ENCODE measurements at regions of chr18 and their contacts with region 1.

Region 1: GRCh38 chr18:24488824-24489493 is 28.5 kb downstream of the HRH4 start:
- DNase-seq: peak; percentile 3
- ATAC-seq: peak; percentile 32; the same call in 2 of the 3 replicates
- H3K4me3 ChIP-seq: no peak overlapping the region
- H3K27ac ChIP-seq: no peak overlapping the region
- H3K4me1 ChIP-seq: peaks cover 10% of the 10 kb centered on the region
- H3K27me3 ChIP-seq: peaks cover 0 to 6% of the 10 kb centered on the region in 2 experiments; a peak in 2 of 4 replicates
- CTCF ChIP-seq: peak; percentile 55 to 63 (median 60); a peak in 5 of 6 replicates
- EP300 ChIP-seq: no peak
- POLR2A ChIP-seq: no peak
- RAD21 ChIP-seq: peak; percentile 68

Region 2: GRCh38 chr18:24176727-24177416 is 312.1 kb before region 1 on chr18:
- CTCF ChIA-PET with region 1: interaction called, 53 read pairs
- POLR2A ChIA-PET with region 1: no interaction called
- RAD21 ChIA-PET with region 1: interaction called, 15 read pairs
- SMC1A ChIA-PET with region 1: interaction called, 27 read pairs
- in situ Hi-C with region 1: loop called (anchors 5 kb)
- intact Hi-C with region 1: loop called (anchors 2 kb)
- DNase-seq: peak; percentile 61
- ATAC-seq: peak; percentile 96
- H3K4me3 ChIP-seq: peak overlapping the region; percentile 19; the same call in 1 of the 2 replicates
- H3K27ac ChIP-seq: peak overlapping the region; percentile 62
- H3K4me1 ChIP-seq: peaks cover 15% of the 10 kb centered on the region
- H3K27me3 ChIP-seq: no peaks in the 10 kb centered on the region
- CTCF ChIP-seq: peak; percentile 61 to 83 (median 83)
- EP300 ChIP-seq: no peak
- POLR2A ChIP-seq: 0 out of 2 replicates have a peak, but pooled peaks have one; percentile 34
- RAD21 ChIP-seq: peak; percentile 78

Region 3: DNA sequence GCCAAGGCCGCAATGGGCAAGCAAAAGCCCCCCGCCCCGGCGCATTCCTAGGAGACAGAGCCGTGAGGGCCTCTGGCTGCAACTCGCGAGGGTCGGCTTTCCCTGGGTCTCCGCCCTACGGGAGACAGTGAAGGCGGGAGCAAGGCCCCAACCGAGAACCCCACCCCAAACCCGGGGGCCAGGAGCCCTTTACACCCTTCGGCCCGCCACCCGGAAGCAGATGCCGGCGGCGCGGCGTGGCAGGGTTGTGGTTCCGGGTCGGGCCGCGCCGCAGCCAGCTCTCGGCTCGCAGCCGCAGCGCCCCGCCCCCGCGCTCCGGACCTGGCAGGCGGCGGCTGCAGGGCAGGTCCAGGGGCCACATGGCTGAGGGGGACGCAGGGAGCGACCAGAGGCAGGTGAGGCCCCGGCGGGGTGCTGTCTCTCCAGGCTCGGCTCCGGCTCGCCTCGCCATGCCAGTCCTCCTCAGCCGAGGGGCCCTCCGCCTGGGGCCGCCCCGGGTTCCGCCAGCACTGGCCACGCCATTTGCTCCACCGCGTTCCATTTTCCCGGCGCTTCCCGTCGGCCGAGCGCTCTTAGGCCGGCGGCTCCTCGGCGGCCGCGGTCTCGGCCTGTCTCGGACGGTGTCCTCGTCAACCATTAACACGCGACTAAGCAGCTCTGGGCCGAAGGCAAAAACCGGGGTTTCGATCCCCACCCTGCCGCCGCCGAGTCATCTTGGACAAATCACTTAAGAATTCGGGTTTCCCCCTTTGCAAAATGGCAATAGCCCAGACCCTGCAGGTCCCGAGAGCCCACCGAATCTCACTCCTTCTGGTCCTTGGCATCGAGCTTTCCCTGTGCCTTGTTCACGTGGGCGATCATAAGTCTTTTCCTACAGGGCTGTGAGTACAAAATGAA is 62.3 kb before region 1 on chr18 and contains the start of gene IMPACT:
- CTCF ChIA-PET with region 1: interaction called, 10 read pairs
- POLR2A ChIA-PET with region 1: no interaction called
- RAD21 ChIA-PET with region 1: no interaction called
- SMC1A ChIA-PET with region 1: interaction called, 3 read pairs
- in situ Hi-C with region 1: no loop called
- intact Hi-C with region 1: loop called (anchors 10 kb)
- DNase-seq: no peak
- ATAC-seq: peak; percentile 85
- H3K4me3 ChIP-seq: peak within 1 kb of the TSS; percentile 57
- H3K27ac ChIP-seq: no peak within 1 kb of the TSS
- H3K4me1 ChIP-seq: peaks cover 6% of the 10 kb centered on the region; the same call in 1 of the 2 replicates
- H3K27me3 ChIP-seq: no peaks in the 10 kb centered on the region; a peak in 1 of 4 replicates
- CTCF ChIP-seq: no peak
- EP300 ChIP-seq: no peak
- POLR2A ChIP-seq: peak; percentile 66
- RAD21 ChIP-seq: no peak
- polyA plus RNA-seq, gene IMPACT: 0.27 to 0.84 TPM

Region 4: DNA sequence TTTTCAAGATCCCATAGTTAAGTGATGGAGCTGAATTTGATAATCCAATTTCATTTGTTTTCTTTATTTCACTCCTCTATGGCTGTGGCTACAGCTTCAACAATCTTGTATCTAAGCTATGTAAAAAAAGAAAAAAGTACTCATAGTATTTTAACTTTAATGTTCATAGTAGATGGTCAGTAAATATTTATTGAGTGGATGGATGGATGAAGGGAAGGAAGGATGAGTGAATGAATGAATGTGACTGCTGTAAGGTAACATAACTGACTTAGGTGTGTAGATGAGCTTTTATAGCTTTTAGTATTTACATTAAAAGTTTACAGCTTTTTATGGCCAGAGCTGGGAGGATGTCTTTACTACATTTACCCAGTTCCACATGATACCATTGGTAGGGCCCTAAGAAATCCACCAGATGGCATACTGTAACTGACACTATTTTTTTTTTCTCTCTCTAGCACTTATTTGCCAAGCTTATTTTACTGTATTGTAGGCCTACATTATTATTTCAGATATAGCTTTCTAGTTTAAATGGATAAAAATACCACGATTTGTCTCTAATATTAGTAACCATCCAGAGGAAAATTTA is 41.9 kb before region 1 on chr18:
- CTCF ChIA-PET with region 1: interaction called, 12 read pairs
- POLR2A ChIA-PET with region 1: no interaction called
- RAD21 ChIA-PET with region 1: interaction called, 4 read pairs
- SMC1A ChIA-PET with region 1: interaction called, 3 read pairs
- in situ Hi-C with region 1: no loop called
- intact Hi-C with region 1: no loop called
- DNase-seq: no peak
- ATAC-seq: peak; percentile 59
- H3K4me3 ChIP-seq: no peak overlapping the region
- H3K27ac ChIP-seq: no peak overlapping the region
- H3K4me1 ChIP-seq: peaks cover 14% of the 10 kb centered on the region
- H3K27me3 ChIP-seq: no peaks in the 10 kb centered on the region
- CTCF ChIP-seq: 0 out of 6 replicates have a peak, but pooled peaks of 2 of the 3 experiments have one; percentile 0 to 17
- EP300 ChIP-seq: no peak
- POLR2A ChIP-seq: no peak
- RAD21 ChIP-seq: no peak

Region 5: GRCh38 chr18:24514439-24514838 is 25.5 kb after region 1 on chr18:
- CTCF ChIA-PET with region 1: interaction called, 17 read pairs
- POLR2A ChIA-PET with region 1: interaction called, 3 read pairs
- RAD21 ChIA-PET with region 1: interaction called, 3 read pairs
- SMC1A ChIA-PET with region 1: interaction called, 3 read pairs
- in situ Hi-C with region 1: no loop called
- intact Hi-C with region 1: no loop called
- DNase-seq: no peak
- ATAC-seq: peak; percentile 86
- H3K4me3 ChIP-seq: no peak overlapping the region
- H3K27ac ChIP-seq: no peak overlapping the region
- H3K4me1 ChIP-seq: no peaks in the 10 kb centered on the region
- H3K27me3 ChIP-seq: 0 out of 4 replicates have a peak, but pooled peaks cover 0 to 2% of the 10 kb centered on the region in 2 experiments
- CTCF ChIP-seq: peak; percentile 48 to 67 (median 64)
- EP300 ChIP-seq: no peak
- POLR2A ChIP-seq: no peak
- RAD21 ChIP-seq: peak; percentile 12; the same call in 1 of the 2 replicates

Region 6: DNA sequence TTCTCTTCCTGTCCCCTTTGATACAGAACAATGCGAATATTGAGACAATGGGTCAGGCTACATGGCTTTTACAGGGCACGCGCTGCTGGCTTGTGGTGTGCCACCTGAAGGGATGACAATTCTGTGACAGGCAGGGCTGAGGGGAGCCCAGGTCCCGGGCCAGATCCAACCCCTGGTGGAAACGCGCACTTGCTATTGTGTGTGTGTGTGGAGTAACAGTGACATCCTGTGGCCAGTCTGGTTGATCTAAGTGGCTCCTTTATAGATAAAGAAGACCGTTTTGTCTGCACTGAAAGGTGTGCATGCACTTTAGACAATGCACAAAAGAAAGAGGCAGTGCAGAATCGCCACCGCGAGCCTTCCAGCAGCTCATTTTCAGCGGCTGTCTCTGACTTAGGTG is 245.1 kb after region 1 on chr18:
- CTCF ChIA-PET with region 1: interaction called, 129 read pairs
- POLR2A ChIA-PET with region 1: no interaction called
- RAD21 ChIA-PET with region 1: interaction called, 10 read pairs
- SMC1A ChIA-PET with region 1: interaction called, 3 read pairs
- in situ Hi-C with region 1: loop called (anchors 5 kb)
- intact Hi-C with region 1: no loop called
- DNase-seq: no peak
- ATAC-seq: no peak
- H3K4me3 ChIP-seq: no peak overlapping the region
- H3K27ac ChIP-seq: no peak overlapping the region
- H3K4me1 ChIP-seq: no peaks in the 10 kb centered on the region
- H3K27me3 ChIP-seq: no peaks in the 10 kb centered on the region; a peak in 1 of 4 replicates
- CTCF ChIP-seq: peak in 1 of 3 experiments; percentile 13; a peak in 1 of 6 replicates
- EP300 ChIP-seq: no peak
- POLR2A ChIP-seq: no peak
- RAD21 ChIP-seq: no peak